Lower leg skin (tissue), 4 donors: ENCODE measurements at regions of chr3 and their contacts with region 1.

Region 1: DNA sequence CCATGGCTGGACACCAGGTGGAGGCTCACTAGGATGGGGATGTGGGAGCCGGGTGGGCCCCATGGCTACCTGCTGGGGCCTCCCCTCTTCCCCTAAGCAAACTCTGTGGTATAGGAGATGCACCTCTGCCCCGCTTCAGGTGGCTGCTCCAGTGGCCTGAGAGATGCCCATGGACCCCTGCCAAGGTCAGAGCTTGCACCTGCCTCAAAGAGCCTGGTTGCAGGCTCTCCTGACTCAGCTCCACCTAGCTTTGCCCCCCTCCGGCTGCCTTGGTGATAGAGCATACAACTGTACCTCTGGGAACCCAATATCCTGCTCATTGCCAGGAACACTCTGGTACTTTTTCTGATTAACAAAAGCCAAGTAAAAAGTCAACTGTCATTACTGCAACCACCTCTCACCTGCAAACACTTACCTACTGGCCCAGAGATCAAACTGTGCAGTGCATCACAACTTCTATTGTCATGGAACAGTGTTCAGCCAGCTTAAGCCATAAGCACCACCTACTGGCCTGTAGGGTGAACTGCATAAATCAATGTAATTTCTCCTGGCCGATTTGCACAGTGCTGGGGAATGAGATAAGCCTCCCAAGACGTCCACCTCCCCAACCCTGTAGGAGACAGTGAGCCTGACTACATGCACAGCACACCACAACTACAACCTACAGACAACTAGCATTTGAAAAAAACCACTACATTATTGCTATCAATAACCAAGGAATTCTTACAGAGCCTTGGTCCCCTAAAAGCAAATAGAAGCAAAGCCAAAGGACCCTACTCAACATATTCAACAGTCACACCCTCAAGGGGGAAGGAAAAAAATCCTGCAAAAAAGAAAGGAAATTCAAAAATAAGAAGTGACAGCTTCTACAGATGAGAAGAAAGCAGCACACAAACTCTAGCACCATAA is 352.4 kb upstream of the ARHGEF26 start:
- DNase-seq: peak in 1 of 2 donors; percentile 33
- H3K4me3 ChIP-seq: no peak overlapping the region
- CTCF ChIP-seq: no peak
- POLR2A ChIP-seq: no peak

Region 2: DNA sequence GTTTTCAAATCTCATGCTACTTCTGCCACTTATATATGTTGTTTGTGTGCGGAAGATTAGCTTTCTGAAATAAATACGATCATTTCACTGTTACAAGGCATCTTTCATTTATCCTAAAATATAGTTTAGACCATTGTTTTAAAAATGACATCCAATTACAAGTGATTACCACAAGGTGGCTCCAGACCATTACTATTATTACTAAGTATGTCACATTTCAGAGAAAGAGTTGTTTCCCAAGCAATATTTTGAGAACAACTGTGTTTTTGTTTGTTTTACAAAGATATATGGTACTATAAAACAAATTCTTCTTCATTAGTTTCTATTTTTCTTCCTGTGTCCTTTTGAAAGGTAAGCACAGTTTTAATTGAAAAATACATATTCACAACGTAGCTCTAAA is 742.8 kb before region 1 on chr3:
- intact Hi-C with region 1: loop called (anchors 5 kb)
- DNase-seq: no peak
- H3K4me3 ChIP-seq: no peak overlapping the region
- CTCF ChIP-seq: no peak
- POLR2A ChIP-seq: no peak

Region 3: DNA sequence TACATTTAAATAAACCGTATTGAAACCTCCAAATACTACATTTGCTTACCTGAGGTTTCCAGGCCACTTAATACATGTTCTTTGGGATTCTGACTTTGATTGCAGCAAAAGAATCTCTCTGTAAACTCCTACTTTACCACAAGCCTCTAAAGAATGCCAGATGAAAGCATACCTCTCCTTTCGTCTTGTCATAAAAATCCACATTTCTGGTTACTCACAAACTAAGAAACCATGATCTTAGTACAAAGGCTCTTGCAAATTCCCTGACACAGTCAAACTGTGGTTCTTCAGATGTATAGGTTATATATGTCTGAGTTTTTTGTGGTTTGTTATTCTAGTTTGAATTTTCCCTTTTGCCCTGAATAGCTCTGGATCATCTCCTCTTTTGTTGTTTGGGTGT is 418.4 kb before region 1 on chr3:
- intact Hi-C with region 1: no loop called
- DNase-seq: no peak
- H3K4me3 ChIP-seq: no peak overlapping the region
- CTCF ChIP-seq: no peak
- POLR2A ChIP-seq: no peak